Posterior vena cava (tissue), 2 donors: ENCODE measurements at regions of chr3 and their contacts with region 1.

Region 1: GRCh38 chr3:152087153-152087552 is 181.6 kb upstream of the MBNL1 start:
- DNase-seq: no peak

Region 2: DNA sequence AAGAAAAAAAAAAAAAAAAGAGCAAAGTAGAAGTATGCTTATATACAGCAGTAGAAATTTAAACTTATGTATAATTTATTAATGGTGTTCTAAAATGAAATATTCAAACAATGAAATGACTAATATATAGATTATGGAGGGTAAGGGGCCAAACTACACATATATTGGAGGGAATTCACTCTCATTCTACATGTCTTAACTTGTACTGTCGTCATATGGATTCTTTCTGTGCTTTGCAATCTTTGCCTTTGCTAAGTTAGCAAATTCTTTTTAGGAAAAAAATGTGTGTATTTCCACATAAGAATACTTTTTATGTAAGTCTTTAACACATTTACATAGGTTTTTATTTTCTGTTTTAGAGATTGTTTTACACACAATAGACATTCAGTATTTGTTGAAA is 62.7 kb after region 1 on chr3:
- intact Hi-C with region 1: loop called in 1 of 2 experiments (anchors 10 kb)
- DNase-seq: no peak